ENCODE measurements at regions of chr10 and their contacts with region 1.

Region 1: DNA sequence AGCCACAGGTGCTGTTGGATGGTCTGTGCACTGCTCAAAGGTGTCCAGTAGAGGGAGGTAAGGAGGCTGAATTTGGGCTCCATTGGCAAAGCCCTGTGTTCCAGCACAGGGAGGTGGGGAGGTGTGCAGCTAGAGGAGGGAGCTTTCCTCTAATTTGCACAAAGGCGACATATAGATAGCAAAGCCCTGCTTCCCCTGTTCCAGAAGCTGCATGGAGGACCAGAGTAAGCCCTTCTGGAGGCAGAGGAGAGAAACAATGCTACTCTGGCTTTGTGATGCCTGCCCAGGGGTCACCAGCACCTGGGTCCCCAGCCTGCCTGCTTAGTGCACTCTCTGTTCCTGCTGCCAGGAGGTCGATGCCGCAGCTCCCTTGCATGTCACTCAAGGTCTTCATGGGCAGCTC is 3.4 kb upstream of the ARHGAP22 start:
- DNase-seq: peak; percentile 20
- H3K4me3 Mint-ChIP-seq: no peak overlapping the region
- H3K27ac Mint-ChIP-seq: no peak overlapping the region
- H3K4me1 Mint-ChIP-seq: no peaks in the 10 kb centered on the region
- H3K27me3 Mint-ChIP-seq: peaks cover 31% of the 10 kb centered on the region

Region 2: GRCh38 chr10:48363617-48364355 is 244.5 kb before region 1 on chr10:
- intact Hi-C with region 1: loop called (anchors 2 kb)
- DNase-seq: no peak
- H3K4me3 Mint-ChIP-seq: no peak overlapping the region
- H3K27ac Mint-ChIP-seq: no peak overlapping the region
- H3K4me1 Mint-ChIP-seq: peaks cover 5% of the 10 kb centered on the region
- H3K27me3 Mint-ChIP-seq: no peaks in the 10 kb centered on the region

Region 3: DNA sequence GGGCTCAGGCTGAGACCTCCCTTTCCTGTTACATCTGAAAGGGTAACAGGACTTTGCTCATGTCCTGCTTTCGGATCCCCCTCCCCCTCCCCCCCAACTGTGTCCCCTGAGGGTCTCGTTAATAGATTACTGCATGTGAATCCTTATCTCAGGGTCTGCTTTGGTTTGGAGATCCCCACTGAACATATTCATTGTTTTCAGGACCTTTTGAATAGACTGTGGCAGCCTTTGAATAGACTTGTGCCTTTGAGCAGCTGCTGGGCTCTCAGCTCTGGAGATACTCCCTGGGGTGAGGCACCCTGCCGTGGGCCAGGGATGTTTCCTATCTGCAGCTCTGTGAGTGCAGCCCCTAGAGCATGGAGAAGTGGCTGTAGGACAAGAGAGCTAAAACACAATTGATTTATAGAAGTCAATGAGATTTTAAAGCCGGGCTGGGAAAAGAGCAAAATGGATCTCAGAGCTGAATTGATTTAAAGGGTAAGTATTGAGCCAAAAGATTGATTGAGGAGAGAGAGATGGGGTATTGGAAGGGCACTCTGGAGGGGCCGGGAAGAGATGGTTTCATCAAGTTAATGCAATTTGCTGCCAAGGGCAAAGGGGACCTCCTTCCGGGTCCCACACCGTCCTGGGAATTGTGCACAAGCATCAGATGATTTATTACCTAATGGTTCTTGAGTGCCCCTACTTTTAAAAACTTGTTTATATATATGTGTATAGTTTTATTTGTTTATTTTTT is 13.3 kb before region 1 on chr10:
- intact Hi-C with region 1: no loop called
- DNase-seq: no peak
- H3K4me3 Mint-ChIP-seq: no peak overlapping the region
- H3K27ac Mint-ChIP-seq: no peak overlapping the region
- H3K4me1 Mint-ChIP-seq: no peaks in the 10 kb centered on the region
- H3K27me3 Mint-ChIP-seq: peaks cover 3% of the 10 kb centered on the region

Region 4: DNA sequence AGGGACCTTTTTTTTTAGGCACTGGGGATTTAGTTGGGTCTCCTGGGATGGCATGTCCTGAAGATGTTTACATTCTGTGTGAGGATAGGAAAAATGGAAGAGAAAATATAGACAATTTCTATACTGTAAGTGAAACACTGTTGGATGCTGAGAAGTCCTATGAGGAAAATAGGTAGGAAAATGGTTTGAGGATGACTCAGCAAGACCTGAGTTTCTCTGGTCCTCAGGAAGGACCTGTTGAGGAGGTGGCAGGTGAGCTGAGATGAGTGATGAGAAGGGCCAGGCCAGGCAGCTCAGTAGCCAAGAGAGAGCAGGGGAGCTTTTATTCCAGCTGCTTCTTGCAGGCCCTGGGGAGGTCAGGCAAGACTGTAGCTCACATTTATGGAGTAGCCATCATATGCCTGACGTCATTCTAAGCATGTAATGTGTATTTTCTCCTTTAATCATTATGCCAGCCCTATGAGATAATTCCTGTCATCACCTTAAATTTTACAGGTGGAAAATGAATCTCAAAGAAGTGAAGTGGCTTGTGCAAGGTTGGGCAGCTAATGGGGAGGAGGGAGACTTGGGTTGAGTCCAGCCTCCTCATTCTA is 350.4 kb after region 1 on chr10:
- intact Hi-C with region 1: no loop called
- DNase-seq: no peak
- H3K4me3 Mint-ChIP-seq: no peak overlapping the region
- H3K27ac Mint-ChIP-seq: no peak overlapping the region
- H3K4me1 Mint-ChIP-seq: no peaks in the 10 kb centered on the region
- H3K27me3 Mint-ChIP-seq: peaks cover 2% of the 10 kb centered on the region

Measured in activated T-helper 1 cell treated with anti-CD3 and anti-CD28 coated beads, Interleukin-12 subunit alpha, Interleukin-12 subunit beta, Interleukin-2, Interleukin-4 antibody, amounts not matched to agents 30 ng/mL and 10 ng/mL and 1 ng/mL, durations not matched to agents 14 hours and 24 hours and 36 hours (primary cell).